PC-3 (cell line): ENCODE measurements at regions of chr4 and their contacts with region 1.

Region 1: GRCh38 chr4:5635826-5636195 is 72.5 kb downstream of the EVC2 start:
- DNase-seq: peak; percentile 88
- ATAC-seq: peak; percentile 76
- H3K4me3 ChIP-seq: peak overlapping the region; percentile 16; the same call in 1 of the 2 replicates
- H3K27ac ChIP-seq: peak overlapping the region; percentile 93
- H3K4me1 ChIP-seq: peaks cover 56% of the 10 kb centered on the region
- H3K27me3 ChIP-seq: no peaks in the 10 kb centered on the region
- CTCF ChIP-seq: no peak

Region 2: GRCh38 chr4:5747738-5748365 is 112.0 kb after region 1 on chr4:
- CTCF ChIA-PET with region 1: no interaction called
- POLR2A ChIA-PET with region 1: no interaction called
- intact Hi-C with region 1: loop called (anchors 5 kb)
- DNase-seq: peak; percentile 87
- ATAC-seq: peak; percentile 75
- H3K4me3 ChIP-seq: no peak overlapping the region
- H3K27ac ChIP-seq: peak overlapping the region; percentile 98
- H3K4me1 ChIP-seq: peaks cover 19% of the 10 kb centered on the region
- H3K27me3 ChIP-seq: no peaks in the 10 kb centered on the region
- CTCF ChIP-seq: no peak

Region 3: DNA sequence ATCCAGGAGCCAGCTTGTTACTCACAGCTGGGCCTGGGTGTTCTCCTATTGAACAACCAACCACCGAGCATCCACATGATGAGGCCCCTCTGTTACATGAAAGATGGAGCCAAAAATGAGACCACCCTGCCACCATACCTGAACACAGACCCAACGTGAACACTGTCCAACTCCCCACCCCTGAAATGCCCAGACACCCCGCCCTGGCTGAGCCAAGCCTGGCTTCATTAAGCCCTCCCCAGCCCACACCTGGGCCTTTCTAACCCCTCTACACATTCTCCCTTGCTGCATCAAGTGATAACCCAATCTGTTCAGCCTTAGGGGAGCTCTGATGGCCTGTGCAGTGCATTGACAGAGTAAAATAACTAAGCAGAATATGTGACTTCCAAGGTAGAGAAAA is 155.8 kb after region 1 on chr4:
- CTCF ChIA-PET with region 1: no interaction called
- POLR2A ChIA-PET with region 1: no interaction called
- intact Hi-C with region 1: loop called (anchors 2 kb)
- DNase-seq: no peak
- ATAC-seq: no peak
- H3K4me3 ChIP-seq: no peak overlapping the region
- H3K27ac ChIP-seq: no peak overlapping the region
- H3K4me1 ChIP-seq: no peaks in the 10 kb centered on the region
- H3K27me3 ChIP-seq: no peaks in the 10 kb centered on the region
- CTCF ChIP-seq: no peak